GM12878 (cell line): ENCODE measurements at regions of chr21 and their contacts with region 1.

Region 1: DNA sequence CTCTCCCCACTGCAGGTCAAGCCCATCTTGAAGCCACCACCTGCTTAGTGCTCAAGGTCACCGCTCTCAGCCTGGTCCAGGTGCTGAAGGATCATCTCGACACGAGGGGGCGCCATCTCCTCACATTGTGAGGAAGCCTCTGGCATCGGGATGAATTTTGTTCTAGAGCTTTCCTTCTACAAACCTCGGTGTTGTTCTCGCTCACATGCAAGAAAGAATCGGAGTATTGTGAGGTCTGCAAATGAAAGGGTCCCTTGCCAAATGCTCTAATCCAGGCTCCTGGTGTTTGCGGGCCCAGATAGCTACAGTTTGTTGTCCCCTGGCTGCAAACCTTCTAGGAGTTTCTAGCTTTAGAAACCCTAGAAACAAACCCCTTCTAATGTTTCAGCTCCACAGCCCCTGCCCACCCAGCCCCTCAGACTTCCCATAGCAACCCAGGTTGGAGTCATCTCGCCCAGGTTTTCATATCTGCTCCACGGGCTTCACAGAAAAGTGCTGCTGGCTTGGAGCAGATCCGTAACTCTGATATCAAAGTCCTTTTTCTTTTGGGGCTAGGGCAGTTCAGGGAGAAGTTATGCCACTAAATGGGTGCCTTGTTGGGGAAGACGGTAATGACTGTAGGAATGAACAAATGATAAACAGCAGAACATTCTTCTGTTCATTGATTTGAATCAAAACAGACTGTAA is 8.6 kb upstream of the ATP5PO start:
- DNase-seq: peak; percentile 67
- ATAC-seq: peak; percentile 99
- H3K4me3 ChIP-seq: no peak overlapping the region
- H3K27ac ChIP-seq: no peak overlapping the region
- H3K4me1 ChIP-seq: peaks cover 7% of the 10 kb centered on the region
- H3K27me3 ChIP-seq: no peaks in the 10 kb centered on the region
- CTCF ChIP-seq: peak; percentile 87 to 98 (median 91); a peak in 5 of 6 replicates
- EP300 ChIP-seq: no peak
- POLR2A ChIP-seq: no peak
- RAD21 ChIP-seq: peak; percentile 100

Region 2: GRCh38 chr21:33261635-33262034 is 662.6 kb before region 1 on chr21:
- CTCF ChIA-PET with region 1: no interaction called
- POLR2A ChIA-PET with region 1: no interaction called
- RAD21 ChIA-PET with region 1: no interaction called
- SMC1A ChIA-PET with region 1: no interaction called
- in situ Hi-C with region 1: no loop called
- intact Hi-C with region 1: no loop called
- DNase-seq: no peak
- ATAC-seq: peak; percentile 3; the same call in 1 of the 3 replicates
- H3K4me3 ChIP-seq: no peak overlapping the region
- H3K27ac ChIP-seq: peak overlapping the region; percentile 45
- H3K4me1 ChIP-seq: peaks cover 5% of the 10 kb centered on the region; the same call in 1 of the 2 replicates
- H3K27me3 ChIP-seq: no peaks in the 10 kb centered on the region
- CTCF ChIP-seq: no peak
- EP300 ChIP-seq: no peak
- POLR2A ChIP-seq: no peak
- RAD21 ChIP-seq: no peak

Region 3: GRCh38 chr21:33622253-33622652 is 302.0 kb before region 1 on chr21:
- CTCF ChIA-PET with region 1: no interaction called
- POLR2A ChIA-PET with region 1: no interaction called
- RAD21 ChIA-PET with region 1: no interaction called
- SMC1A ChIA-PET with region 1: no interaction called
- in situ Hi-C with region 1: no loop called
- intact Hi-C with region 1: no loop called
- DNase-seq: no peak
- ATAC-seq: no peak
- H3K4me3 ChIP-seq: no peak overlapping the region
- H3K27ac ChIP-seq: no peak overlapping the region
- H3K4me1 ChIP-seq: no peaks in the 10 kb centered on the region
- H3K27me3 ChIP-seq: no peaks in the 10 kb centered on the region
- CTCF ChIP-seq: no peak
- EP300 ChIP-seq: no peak
- POLR2A ChIP-seq: no peak
- RAD21 ChIP-seq: no peak

Region 4: DNA sequence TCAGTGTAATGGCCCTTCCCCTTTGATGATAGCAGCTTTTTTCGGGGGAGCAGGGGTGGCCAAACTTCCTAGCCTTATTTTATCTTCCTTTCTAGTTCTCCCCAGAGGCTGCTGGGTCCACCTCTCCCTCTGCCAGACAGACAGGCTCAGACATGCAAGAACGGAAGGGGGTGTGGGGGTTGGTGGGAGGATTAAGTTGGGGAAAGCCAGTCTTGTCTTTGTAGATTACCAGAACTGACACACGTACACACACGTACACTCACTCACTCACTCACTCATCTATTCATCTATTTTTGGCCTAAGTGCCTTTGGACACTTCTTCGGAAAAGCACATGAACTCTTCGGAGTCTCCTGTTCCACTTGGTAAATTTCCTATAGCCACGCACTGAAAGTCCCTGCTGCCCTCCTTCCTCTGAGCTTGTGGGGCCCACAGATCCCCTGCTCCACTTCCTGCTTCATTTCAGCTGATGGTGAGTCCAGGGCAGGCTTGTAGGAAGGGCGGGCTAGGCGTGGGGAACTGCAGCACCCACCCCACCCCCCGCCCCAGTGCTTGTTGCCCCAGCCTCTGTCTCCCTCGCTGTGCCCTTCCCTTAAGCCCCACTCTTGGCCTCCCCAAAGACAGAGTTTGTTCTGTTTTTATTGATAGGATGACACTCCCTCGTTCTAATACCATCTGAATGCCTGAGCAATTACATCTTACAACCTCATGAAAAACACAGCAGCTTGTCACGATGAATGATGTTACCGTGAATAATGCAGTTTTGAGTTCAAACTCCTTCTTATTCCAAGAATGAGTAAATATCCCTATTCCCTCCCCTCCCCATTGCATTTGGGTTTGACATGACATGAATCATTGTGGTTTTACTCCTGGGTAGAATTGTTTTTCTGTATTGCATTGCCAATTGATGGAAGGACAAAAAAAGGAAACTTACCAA is 52.1 kb after region 1 on chr21:
- CTCF ChIA-PET with region 1: interaction called, 21 read pairs
- POLR2A ChIA-PET with region 1: interaction called, 3 read pairs
- RAD21 ChIA-PET with region 1: interaction called, 24 read pairs
- SMC1A ChIA-PET with region 1: interaction called, 45 read pairs
- in situ Hi-C with region 1: no loop called
- intact Hi-C with region 1: loop called (anchors 2 kb)
- DNase-seq: peak; percentile 90
- ATAC-seq: peak; percentile 71
- H3K4me3 ChIP-seq: peak overlapping the region; percentile 51; the same call in 1 of the 2 replicates
- H3K27ac ChIP-seq: peak overlapping the region; percentile 99
- H3K4me1 ChIP-seq: peaks cover 27% of the 10 kb centered on the region
- H3K27me3 ChIP-seq: no peaks in the 10 kb centered on the region
- CTCF ChIP-seq: no peak
- EP300 ChIP-seq: no peak; a peak in 2 of 4 replicates
- POLR2A ChIP-seq: peak; percentile 57
- RAD21 ChIP-seq: no peak

Region 5: DNA sequence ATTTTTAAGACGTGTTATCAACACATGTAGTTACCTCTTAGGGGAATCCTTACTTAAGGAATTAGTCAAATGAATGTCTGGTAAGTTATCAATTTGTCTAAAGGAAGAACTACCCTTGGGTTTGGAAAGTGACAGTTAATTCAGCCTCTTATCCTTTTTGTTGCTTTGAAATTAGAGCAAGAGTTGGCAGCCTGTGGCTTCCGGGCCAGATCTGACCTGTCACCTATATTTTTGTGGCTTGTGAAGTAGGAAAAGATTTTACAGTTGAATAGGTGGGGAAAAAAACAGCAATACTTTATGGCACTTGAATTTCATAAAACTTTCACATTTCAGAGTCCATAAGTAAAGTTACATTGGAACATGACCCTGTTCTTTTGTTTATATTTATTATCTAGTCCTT is 154.7 kb after region 1 on chr21:
- CTCF ChIA-PET with region 1: interaction called, 29 read pairs
- POLR2A ChIA-PET with region 1: interaction called, 3 read pairs
- RAD21 ChIA-PET with region 1: interaction called, 20 read pairs
- SMC1A ChIA-PET with region 1: interaction called, 41 read pairs
- in situ Hi-C with region 1: loop called (anchors 10 kb)
- intact Hi-C with region 1: loop called (anchors 5 kb)
- DNase-seq: no peak
- ATAC-seq: peak; percentile 8; the same call in 2 of the 3 replicates
- H3K4me3 ChIP-seq: 0 out of 2 replicates have a peak overlapping the region, but pooled peaks have one; percentile 16
- H3K27ac ChIP-seq: 0 out of 2 replicates have a peak overlapping the region, but pooled peaks have one; percentile 9
- H3K4me1 ChIP-seq: peaks cover 32% of the 10 kb centered on the region
- H3K27me3 ChIP-seq: no peaks in the 10 kb centered on the region
- CTCF ChIP-seq: no peak
- EP300 ChIP-seq: no peak
- POLR2A ChIP-seq: no peak
- RAD21 ChIP-seq: no peak

Region 6: DNA sequence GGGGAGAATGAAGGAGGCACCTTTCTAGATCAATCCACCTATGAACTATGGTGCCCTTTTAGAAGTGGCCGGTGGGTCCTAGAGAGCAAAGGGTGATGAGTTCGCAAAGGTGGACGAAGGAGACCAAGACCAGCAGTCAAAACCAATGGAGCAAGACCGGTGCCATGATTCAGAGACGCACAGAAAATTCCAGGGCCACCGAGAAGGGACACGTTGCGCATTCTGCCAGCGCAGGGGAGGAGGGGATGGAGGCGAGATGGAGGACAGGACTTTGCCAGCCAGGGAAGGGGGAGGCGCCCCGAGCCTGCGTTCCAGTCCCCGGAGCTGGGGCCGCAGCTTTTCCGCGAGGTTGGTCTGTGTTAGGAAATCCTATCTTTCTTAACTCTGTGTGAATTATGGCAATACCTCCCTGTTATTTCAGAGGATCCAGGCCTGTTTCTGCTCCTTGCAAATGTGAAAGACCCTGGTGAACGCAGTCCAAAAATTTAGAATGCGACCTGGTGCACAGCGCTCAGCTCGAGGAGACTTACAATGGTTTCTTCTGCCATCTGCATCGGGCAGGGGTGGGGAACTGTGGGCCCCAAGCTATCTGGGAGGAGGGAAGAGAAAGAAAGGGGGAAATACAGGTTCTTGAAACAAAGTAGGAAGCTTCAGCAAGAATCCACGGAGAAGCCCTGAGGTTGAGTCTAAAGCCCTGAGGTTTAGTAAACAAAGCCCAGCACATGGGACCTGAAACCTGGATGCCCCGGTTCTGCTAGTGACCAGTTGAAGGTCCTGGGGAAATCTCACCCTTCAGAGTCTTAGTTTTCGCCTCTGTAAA is 278.5 kb after region 1 on chr21:
- CTCF ChIA-PET with region 1: interaction called, 18 read pairs
- POLR2A ChIA-PET with region 1: no interaction called
- RAD21 ChIA-PET with region 1: interaction called, 5 read pairs
- SMC1A ChIA-PET with region 1: interaction called, 10 read pairs
- in situ Hi-C with region 1: no loop called
- intact Hi-C with region 1: no loop called
- DNase-seq: no peak
- ATAC-seq: peak; percentile 21
- H3K4me3 ChIP-seq: no peak overlapping the region
- H3K27ac ChIP-seq: no peak overlapping the region
- H3K4me1 ChIP-seq: peaks cover 8% of the 10 kb centered on the region
- H3K27me3 ChIP-seq: no peaks in the 10 kb centered on the region; a peak in 1 of 4 replicates
- CTCF ChIP-seq: no peak
- EP300 ChIP-seq: no peak
- POLR2A ChIP-seq: no peak
- RAD21 ChIP-seq: no peak

Region 7: DNA sequence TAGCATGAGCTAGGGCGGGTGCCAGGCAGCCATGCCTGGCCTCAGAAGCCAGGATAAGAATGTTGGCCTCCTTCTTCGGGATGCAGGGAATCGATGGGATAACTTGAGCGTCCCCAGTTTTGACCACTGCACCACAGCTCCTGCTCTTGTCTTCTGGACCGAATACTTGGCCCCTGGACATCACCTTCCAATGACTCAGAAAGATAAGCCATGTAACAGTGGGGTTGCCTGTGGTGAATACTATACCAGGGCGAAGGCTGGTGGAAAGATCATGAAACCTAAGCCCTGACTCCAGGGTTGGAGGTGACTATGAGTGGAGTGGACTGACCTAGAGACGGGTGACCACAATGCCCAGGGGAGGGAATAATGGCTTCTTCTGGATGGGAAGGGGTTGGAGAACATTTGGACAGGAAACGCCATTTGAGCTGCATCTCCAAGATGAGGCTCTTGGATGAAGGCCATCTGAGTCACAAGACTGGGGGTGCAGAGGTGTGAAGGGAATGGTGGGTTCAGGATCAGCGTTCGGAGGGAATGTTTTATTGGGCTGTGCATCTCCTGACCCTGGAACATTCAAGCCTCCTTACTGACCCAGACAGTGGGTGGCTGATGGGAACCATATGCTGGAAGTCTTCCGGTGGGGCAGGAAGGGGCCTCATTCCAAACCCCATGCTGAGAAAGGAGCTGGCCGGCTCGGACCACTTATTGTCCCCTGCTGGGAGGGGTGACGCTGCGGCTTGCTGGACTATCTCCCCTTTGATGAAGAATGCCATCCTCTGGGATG is 421.1 kb after region 1 on chr21:
- CTCF ChIA-PET with region 1: interaction called, 349 read pairs
- POLR2A ChIA-PET with region 1: interaction called, 21 read pairs
- RAD21 ChIA-PET with region 1: interaction called, 241 read pairs
- SMC1A ChIA-PET with region 1: interaction called, 169 read pairs
- in situ Hi-C with region 1: loop called (anchors 5 kb)
- intact Hi-C with region 1: no loop called
- DNase-seq: no peak
- ATAC-seq: no peak
- H3K4me3 ChIP-seq: no peak overlapping the region
- H3K27ac ChIP-seq: no peak overlapping the region
- H3K4me1 ChIP-seq: no peaks in the 10 kb centered on the region
- H3K27me3 ChIP-seq: no peaks in the 10 kb centered on the region; a peak in 1 of 4 replicates
- CTCF ChIP-seq: no peak
- EP300 ChIP-seq: no peak
- POLR2A ChIP-seq: no peak
- RAD21 ChIP-seq: no peak

Region 8: GRCh38 chr21:34582506-34583150 is 658.4 kb after region 1 on chr21:
- CTCF ChIA-PET with region 1: no interaction called
- POLR2A ChIA-PET with region 1: no interaction called
- RAD21 ChIA-PET with region 1: no interaction called
- SMC1A ChIA-PET with region 1: no interaction called
- in situ Hi-C with region 1: no loop called
- intact Hi-C with region 1: no loop called
- DNase-seq: no peak
- ATAC-seq: peak; percentile 95
- H3K4me3 ChIP-seq: no peak overlapping the region
- H3K27ac ChIP-seq: no peak overlapping the region
- H3K4me1 ChIP-seq: peaks cover 14% of the 10 kb centered on the region; the same call in 1 of the 2 replicates
- H3K27me3 ChIP-seq: no peaks in the 10 kb centered on the region
- CTCF ChIP-seq: peak; percentile 45 to 55 (median 48); a peak in 5 of 6 replicates
- EP300 ChIP-seq: no peak
- POLR2A ChIP-seq: no peak
- RAD21 ChIP-seq: peak; percentile 71

Region 9: DNA sequence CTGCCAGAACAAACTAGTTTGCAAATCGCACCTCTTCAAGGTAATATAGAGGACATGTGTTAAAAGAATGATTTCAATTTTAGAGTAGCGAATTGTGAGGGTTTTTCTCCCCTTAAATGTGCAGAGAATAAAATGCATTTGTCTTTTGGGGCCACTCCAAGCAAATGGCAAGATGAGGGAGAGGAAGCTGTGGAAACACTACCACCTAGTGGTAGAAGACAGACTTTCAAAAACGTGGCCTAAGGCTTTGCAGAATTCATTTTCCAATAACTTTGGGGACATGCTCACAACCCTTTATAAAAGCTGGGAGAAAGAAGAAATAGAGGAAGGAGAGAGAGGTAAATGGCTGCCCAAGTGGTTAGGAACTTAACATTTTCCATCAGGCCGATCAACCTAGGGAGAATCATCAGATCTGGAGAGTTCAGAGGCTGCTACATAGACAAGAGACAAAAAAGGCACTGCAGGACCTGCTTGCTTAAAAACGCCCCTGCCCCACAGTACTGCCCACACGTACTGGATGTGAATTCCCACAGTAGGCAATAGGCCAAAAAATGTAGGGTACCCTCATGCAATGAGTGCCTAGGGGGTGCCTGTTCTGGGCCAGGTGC is 706.4 kb after region 1 on chr21:
- CTCF ChIA-PET with region 1: interaction called, 3 read pairs
- POLR2A ChIA-PET with region 1: no interaction called
- RAD21 ChIA-PET with region 1: no interaction called
- SMC1A ChIA-PET with region 1: no interaction called
- in situ Hi-C with region 1: loop called (anchors 5 kb)
- intact Hi-C with region 1: no loop called
- DNase-seq: peak; percentile 33
- ATAC-seq: peak; percentile 92
- H3K4me3 ChIP-seq: no peak overlapping the region
- H3K27ac ChIP-seq: no peak overlapping the region
- H3K4me1 ChIP-seq: no peaks in the 10 kb centered on the region
- H3K27me3 ChIP-seq: no peaks in the 10 kb centered on the region
- CTCF ChIP-seq: peak; percentile 65 to 87 (median 75)
- EP300 ChIP-seq: no peak
- POLR2A ChIP-seq: no peak
- RAD21 ChIP-seq: peak; percentile 98